Endothelial cell of umbilical vein (primary cell): ENCODE measurements at regions of chr10 and their contacts with region 1.

Region 1: DNA sequence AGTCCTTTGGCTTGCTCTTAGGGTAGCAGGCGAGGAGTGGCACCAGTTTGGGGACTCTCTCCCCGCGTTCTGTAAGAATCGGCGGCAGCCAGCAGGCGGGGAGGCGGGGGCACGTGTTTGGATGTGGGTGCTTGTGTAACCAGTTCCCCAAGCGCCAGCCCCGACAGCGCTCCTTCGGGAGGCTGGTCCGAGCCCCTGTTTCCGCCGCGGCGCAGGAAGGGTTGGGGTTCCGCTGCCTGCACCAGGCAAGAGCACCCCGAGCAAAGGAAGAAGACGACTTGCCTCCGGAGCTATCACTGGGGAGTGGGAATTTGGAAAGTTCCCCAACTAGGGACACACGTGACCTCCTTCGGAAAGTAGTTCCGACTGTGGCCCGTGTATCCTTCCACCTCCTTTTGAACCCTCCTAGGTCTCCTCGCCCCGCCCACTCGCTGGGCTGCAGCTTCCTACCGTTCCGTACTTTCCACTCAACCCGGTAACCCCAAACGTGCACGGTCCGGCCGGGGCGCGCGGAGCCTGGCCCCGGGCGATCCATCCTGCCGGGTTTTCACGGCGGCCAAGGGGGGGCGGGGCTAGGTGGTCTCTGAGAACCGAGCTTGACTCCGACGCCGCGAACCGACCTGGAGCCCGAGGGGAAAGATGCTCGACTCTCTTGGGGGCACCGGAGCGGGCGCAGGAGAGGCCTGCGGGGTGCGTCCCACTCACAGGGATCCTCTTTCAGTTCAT is 1.2 kb downstream of the KLLN start:
- DNase-seq: peak; percentile 93
- H3K4me3 ChIP-seq: peak overlapping the region; percentile 50 to 78 (median 65)
- H3K27ac ChIP-seq: peak overlapping the region; percentile 3
- H3K4me1 ChIP-seq: peaks cover 4% of the 10 kb centered on the region
- H3K27me3 ChIP-seq: no peaks in the 10 kb centered on the region
- CTCF ChIP-seq: no peak
- POLR2A ChIP-seq: peak; percentile 79

Region 2: DNA sequence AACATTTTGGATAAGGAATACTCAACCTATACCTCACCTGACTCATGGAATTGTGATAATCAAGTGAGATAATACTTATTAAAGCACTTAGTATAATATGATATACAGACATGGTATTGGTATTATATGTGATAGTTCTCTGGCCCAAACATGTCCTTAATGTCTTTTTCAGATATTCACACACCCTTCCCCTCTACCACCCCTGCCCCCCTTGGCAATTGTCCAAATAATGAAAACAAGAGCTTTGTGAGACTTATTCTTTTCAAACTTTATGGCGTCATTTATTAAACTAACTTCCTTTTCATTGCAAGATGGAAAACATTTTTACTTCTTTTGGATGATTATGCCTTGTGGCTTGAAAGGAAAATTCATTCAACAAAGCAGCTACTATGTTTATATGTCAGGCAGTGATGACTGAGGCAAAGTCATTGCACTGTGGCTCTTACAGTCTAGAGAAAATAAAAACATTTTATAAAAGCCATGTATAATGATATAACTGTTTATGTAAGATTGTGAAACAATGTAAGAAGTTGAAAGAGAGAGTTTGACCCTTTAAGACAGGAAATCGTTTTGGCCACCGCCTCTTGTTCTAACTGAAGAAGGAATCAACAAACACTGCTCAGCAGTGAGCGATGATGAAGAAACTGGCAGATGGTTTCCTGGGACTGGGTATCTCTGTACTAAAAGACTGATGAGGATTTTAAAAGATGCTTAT is 330.1 kb before region 1 on chr10:
- CTCF ChIA-PET with region 1: interaction called, 3 read pairs
- POLR2A ChIA-PET with region 1: no interaction called
- dilution Hi-C with region 1: no loop called
- intact Hi-C with region 1: loop called (anchors 10 kb)
- DNase-seq: peak; percentile 87
- H3K4me3 ChIP-seq: peak overlapping the region in 1 of 3 experiments; percentile 11
- H3K27ac ChIP-seq: peak overlapping the region; percentile 59
- H3K4me1 ChIP-seq: peaks cover 17% of the 10 kb centered on the region
- H3K27me3 ChIP-seq: no peaks in the 10 kb centered on the region
- CTCF ChIP-seq: no peak
- POLR2A ChIP-seq: no peak

Region 3: GRCh38 chr10:87875929-87876571 is 13.9 kb after region 1 on chr10:
- CTCF ChIA-PET with region 1: interaction called, 10 read pairs
- POLR2A ChIA-PET with region 1: no interaction called
- dilution Hi-C with region 1: no loop called
- intact Hi-C with region 1: no loop called
- DNase-seq: no peak
- H3K4me3 ChIP-seq: no peak overlapping the region
- H3K27ac ChIP-seq: no peak overlapping the region
- H3K4me1 ChIP-seq: peaks cover 21% of the 10 kb centered on the region
- H3K27me3 ChIP-seq: no peaks in the 10 kb centered on the region
- CTCF ChIP-seq: no peak
- POLR2A ChIP-seq: no peak

Region 4: DNA sequence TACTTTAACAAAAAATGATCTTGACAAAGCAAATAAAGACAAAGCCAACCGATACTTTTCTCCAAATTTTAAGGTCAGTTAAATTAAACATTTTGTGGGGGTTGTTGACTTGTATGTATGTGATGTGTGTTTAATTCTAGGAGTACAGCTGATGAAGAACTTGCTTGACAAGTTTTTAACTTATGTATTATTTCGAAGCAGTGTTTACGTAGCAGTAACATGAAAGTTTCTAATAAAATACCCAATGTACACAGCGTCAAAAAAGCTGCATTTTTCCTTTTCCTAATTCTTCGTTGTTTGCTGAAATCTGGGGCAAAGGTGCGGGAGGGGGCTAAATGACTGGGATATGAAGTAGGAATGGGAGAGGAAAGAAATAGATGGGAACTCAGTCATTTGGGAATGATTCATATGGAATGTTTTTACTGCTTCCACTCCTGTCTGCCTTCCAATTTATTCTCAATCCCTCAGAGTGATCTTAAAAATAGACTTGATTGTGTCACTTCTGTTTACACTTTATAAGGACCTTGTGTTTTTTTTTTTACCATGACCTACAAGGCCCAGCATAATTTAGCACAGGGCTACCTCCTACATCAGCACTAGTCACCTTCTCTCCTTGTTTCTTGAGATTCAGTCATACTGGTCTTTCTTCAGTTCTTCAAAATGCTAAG is 99.1 kb after region 1 on chr10:
- CTCF ChIA-PET with region 1: interaction called, 3 read pairs
- POLR2A ChIA-PET with region 1: interaction called, 3 read pairs
- dilution Hi-C with region 1: no loop called
- intact Hi-C with region 1: loop called (anchors 1 kb)
- DNase-seq: peak; percentile 84
- H3K4me3 ChIP-seq: no peak overlapping the region
- H3K27ac ChIP-seq: peak overlapping the region; percentile 58
- H3K4me1 ChIP-seq: peaks cover 26% of the 10 kb centered on the region
- H3K27me3 ChIP-seq: no peaks in the 10 kb centered on the region
- CTCF ChIP-seq: no peak
- POLR2A ChIP-seq: no peak

Region 5: GRCh38 chr10:88152720-88153119 is 290.6 kb after region 1 on chr10:
- CTCF ChIA-PET with region 1: interaction called, 3 read pairs
- POLR2A ChIA-PET with region 1: no interaction called
- dilution Hi-C with region 1: no loop called
- intact Hi-C with region 1: loop called (anchors 1 kb)
- DNase-seq: peak; percentile 89
- H3K4me3 ChIP-seq: no peak overlapping the region
- H3K27ac ChIP-seq: peak overlapping the region; percentile 92
- H3K4me1 ChIP-seq: peaks cover 33% of the 10 kb centered on the region
- H3K27me3 ChIP-seq: no peaks in the 10 kb centered on the region
- CTCF ChIP-seq: no peak
- POLR2A ChIP-seq: peak; percentile 76

Region 6: GRCh38 chr10:88386821-88387773 is 525.0 kb after region 1 on chr10:
- CTCF ChIA-PET with region 1: interaction called, 178 read pairs
- POLR2A ChIA-PET with region 1: interaction called, 17 read pairs
- dilution Hi-C with region 1: no loop called
- intact Hi-C with region 1: loop called (anchors 1 kb)
- DNase-seq: peak; percentile 88
- H3K4me3 ChIP-seq: peak overlapping the region in 1 of 3 experiments; percentile 12
- H3K27ac ChIP-seq: no peak overlapping the region
- H3K4me1 ChIP-seq: peaks cover 6% of the 10 kb centered on the region
- H3K27me3 ChIP-seq: no peaks in the 10 kb centered on the region
- CTCF ChIP-seq: no peak
- POLR2A ChIP-seq: no peak